ENCODE measurements at regions of chr4 and their contacts with region 1.

Region 1: GRCh38 chr4:121484633-121485032 is 103.8 kb upstream of the QRFPR start:
- DNase-seq: peak; percentile 15 to 36 (median 18)
- ATAC-seq: peak; percentile 94
- H3K4me3 ChIP-seq: no peak overlapping the region
- H3K27ac ChIP-seq: no peak overlapping the region
- H3K4me1 ChIP-seq: no peaks in the 10 kb centered on the region
- H3K27me3 ChIP-seq: no peaks in the 10 kb centered on the region
- CTCF ChIP-seq: peak; percentile 60 to 69 (median 64)
- EP300 ChIP-seq: no peak
- POLR2A ChIP-seq: no peak
- RAD21 ChIP-seq: peak; percentile 25 to 39

Region 2: DNA sequence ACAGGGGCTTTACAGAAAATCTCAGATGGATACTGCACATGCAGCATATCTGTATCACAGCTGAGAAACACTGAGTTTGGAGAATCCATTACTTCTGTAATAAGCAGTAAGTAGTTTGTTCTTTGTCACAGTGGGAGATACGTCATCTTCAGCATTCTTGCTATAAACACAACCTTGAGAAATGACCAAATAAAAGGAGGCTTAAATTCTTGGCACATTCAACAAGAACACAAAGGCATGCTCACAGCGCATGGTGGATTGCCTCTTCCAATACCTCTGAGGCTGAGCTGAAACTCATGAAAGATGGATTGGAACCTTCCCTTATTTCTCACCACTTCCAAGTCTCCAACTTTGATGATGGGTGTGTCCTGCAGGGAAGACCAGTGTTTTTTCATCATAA is 157.7 kb after region 1 on chr4:
- CTCF ChIA-PET with region 1: no interaction called
- POLR2A ChIA-PET with region 1: no interaction called
- in situ Hi-C with region 1: no loop called
- intact Hi-C with region 1: loop called (anchors 5 kb)
- DNase-seq: no peak
- ATAC-seq: no peak
- H3K4me3 ChIP-seq: no peak overlapping the region
- H3K27ac ChIP-seq: no peak overlapping the region
- H3K4me1 ChIP-seq: no peaks in the 10 kb centered on the region
- H3K27me3 ChIP-seq: no peaks in the 10 kb centered on the region; a peak in 1 of 5 replicates
- CTCF ChIP-seq: no peak
- EP300 ChIP-seq: no peak
- POLR2A ChIP-seq: no peak
- RAD21 ChIP-seq: no peak

Region 3: GRCh38 chr4:121736735-121737351 is 252.2 kb after region 1 on chr4:
- CTCF ChIA-PET with region 1: no interaction called
- POLR2A ChIA-PET with region 1: no interaction called
- in situ Hi-C with region 1: loop called (anchors 10 kb)
- intact Hi-C with region 1: loop called (anchors 2 kb)
- DNase-seq: peak; percentile 31 to 68 (median 48)
- ATAC-seq: peak; percentile 88
- H3K4me3 ChIP-seq: no peak overlapping the region
- H3K27ac ChIP-seq: no peak overlapping the region
- H3K4me1 ChIP-seq: no peaks in the 10 kb centered on the region
- H3K27me3 ChIP-seq: peaks cover 7 to 19% of the 10 kb centered on the region in 2 experiments
- CTCF ChIP-seq: peak; percentile 58 to 75 (median 75)
- EP300 ChIP-seq: no peak
- POLR2A ChIP-seq: no peak
- RAD21 ChIP-seq: peak; percentile 65 to 78

Region 4: GRCh38 chr4:122602277-122603142 is 1117.9 kb after region 1 on chr4:
- CTCF ChIA-PET with region 1: no interaction called
- POLR2A ChIA-PET with region 1: no interaction called
- in situ Hi-C with region 1: no loop called
- intact Hi-C with region 1: no loop called
- DNase-seq: peak; percentile 16 to 77 (median 40)
- ATAC-seq: peak; percentile 93
- H3K4me3 ChIP-seq: no peak overlapping the region; the same call in 1 of the 2 replicates
- H3K27ac ChIP-seq: peak overlapping the region; percentile 61
- H3K4me1 ChIP-seq: peaks cover 0 to 21% of the 10 kb centered on the region in 2 experiments; a peak in 4 of 5 replicates
- H3K27me3 ChIP-seq: no peaks in the 10 kb centered on the region
- CTCF ChIP-seq: peak; percentile 51 to 76 (median 57); a peak in 4 of 6 replicates
- EP300 ChIP-seq: peak; percentile 3; the same call in 1 of the 2 replicates
- POLR2A ChIP-seq: no peak
- RAD21 ChIP-seq: peak; percentile 81 to 88

Measured in K562 (cell line).